Head of caudate nucleus (tissue), 42 donors: ENCODE measurements at regions of chr17 and their contacts with region 1.

Region 1: DNA sequence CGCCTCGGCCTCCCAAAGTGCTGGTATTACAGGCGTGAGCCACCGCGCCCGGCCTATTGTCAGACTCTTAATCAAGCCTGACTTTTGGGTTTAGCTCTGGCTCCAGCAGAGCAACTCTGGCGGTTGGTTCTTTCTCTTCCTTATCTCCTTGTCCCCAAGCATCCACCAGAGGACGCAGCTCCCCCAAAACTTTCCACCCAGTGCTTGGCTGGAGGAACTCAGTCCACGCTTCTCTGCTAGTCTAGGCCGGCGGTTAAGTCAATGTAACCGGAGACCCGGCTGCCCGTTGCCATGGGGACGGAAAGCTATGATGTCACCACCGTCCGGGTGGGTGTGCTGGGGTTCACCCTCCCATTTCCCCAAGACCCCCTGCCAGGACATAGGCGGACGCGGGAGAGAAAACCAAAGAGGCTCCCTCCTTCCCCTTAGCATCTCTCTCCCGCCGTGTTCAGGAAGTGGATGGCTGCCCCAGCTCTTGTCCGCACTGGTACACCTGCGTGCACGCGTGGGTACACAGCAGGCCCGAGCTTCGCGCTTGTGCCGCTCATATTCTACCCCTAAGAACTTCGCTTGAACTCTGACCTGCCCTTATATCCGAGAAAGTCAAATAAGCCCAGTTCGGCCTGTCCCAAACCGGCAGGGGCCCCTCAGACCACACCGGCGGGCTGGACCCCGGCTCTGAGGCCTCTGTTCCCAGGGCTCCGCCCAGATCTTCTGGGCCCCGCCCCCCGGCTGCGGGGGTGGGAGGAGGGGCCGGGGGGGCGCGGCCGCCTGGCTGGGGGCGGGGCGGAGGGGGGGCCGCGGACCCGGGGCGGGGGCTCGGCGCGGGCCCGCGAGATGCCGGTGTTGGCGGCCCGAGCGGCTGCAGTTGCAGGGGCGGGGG is at the start of gene RND2:
- DNase-seq: peak; percentile 81 to 97 (median 92)

Region 2: DNA sequence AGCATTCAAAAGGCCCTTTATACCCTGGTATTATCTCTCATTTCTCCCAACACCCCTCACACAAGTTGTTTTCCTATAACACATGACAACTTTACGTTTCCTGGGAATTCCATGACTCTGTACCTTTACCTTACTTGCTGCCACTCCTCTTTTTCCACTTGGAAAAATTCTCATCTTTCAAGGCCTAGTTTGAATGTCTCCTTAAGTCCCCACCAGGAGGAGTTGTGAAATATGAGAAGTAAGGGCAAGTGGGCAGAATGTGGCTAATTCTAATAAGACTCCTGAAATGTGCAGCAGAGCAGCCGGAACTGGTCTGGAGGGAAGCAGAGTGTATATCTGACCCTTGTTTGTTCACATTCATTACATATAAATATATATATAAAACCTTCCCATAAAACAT is 60.8 kb after region 1 on chr17:
- intact Hi-C with region 1: loop called (anchors 10 kb)
- DNase-seq: no peak

Region 3: DNA sequence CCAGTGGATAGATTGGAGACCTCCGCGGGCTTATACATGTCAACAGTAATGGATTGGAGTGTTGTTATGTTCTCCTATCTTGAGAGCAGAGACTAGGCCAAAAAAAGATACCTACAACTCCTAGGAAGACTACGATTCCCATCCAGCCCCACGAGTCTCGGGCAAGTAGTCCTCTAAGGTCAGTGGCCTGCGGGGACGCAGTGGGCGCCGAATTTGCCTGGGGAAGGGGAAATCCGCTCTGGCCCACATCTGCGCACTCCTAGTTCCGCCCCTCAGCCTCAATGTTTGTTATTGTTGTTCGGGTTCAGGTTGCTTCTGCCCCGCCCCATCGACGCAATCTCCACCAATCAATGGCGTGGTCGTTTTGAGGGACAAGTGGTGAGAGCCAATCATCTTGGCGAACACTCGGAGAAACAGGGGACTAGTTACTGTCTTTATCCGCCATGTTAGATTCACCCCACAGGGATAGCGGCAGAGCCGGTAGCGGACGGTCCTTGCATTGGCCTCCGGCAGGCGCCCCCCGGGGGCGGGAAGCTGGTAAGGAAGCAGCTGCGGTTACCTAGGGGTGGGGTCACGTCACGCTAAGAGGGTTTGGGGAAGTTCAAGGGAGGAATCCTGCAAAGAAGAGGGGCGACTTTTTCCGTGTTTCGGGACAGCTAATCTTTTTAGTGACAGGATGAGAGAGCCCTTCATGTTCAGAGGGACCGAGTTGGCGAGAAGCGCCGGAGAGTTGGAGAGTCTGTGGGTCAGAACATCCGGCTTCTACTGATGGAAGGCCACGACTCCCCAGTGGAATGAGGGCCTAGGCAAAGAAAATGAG is 146.3 kb after region 1 on chr17 and contains the start of gene NBR1:
- intact Hi-C with region 1: loop called (anchors 5 kb)
- DNase-seq: peak; percentile 89 to 99 (median 97)